Right ventricle myocardium superior (tissue), 1 donor: ENCODE measurements at regions of chr3 and their contacts with region 1.

Region 1: GRCh38 chr3:100047455-100048141 is 66.7 kb downstream of the FILIP1L start:
- DNase-seq: no peak
- ATAC-seq: no peak

Region 2: GRCh38 chr3:99875929-99876841 is 171.4 kb before region 1 on chr3:
- intact Hi-C with region 1: loop called (anchors 10 kb)
- DNase-seq: peak; percentile 89
- ATAC-seq: peak; percentile 98

Region 3: DNA sequence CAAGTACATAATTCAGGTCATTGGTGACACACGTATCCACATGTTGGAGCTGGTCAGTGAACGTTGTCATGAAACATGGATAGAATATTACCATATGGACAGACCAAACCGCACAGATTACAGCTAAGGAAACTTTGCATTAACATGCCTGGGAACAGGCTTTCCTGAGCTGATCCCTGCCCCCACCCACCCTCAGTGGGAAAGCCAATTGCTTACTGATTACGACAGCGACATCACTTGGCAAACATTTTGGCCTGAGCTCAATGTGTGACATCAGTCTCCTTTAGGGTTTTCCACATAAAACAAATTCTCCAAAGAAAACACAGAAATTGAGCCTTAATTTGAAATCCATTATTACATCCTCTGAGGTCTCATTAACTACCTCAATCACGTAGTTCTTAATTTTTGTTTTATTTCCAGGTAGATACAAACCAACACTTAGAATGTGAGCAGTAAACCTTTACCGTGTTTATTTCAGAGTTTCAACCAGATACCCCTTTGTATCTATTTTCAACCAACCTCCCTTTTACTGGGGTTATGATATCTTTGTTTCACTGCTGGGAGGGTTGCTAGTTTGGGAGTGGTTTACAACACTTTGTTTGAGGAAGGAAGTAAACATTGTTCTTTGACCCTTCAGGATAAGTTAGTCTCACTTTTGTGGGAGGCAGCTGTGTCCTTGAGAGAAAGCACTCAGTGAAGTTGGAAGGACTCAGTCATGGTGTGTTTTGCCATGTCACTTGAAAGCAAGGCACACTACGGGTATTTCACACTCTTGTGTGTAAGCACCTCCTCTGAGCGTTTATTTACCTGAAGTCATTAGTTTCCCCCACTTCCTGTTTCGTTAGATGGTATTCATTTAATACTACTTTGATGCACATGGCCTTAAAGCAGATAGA is 126.9 kb before region 1 on chr3:
- intact Hi-C with region 1: no loop called
- DNase-seq: peak; percentile 82
- ATAC-seq: peak; percentile 88

Region 4: GRCh38 chr3:99945328-99945995 is 102.1 kb before region 1 on chr3:
- intact Hi-C with region 1: loop called (anchors 10 kb)
- DNase-seq: peak; percentile 39
- ATAC-seq: peak; percentile 80